CD4-positive, alpha-beta T cell (primary cell): ENCODE measurements at regions of chr15 and their contacts with region 1.

Region 1: GRCh38 chr15:63588826-63589225 is 8.4 kb upstream of the FBXL22 start:
- DNase-seq: no peak
- ATAC-seq: no peak
- H3K4me3 ChIP-seq: no peak overlapping the region
- H3K4me3 Mint-ChIP-seq: no peak overlapping the region
- H3K27ac ChIP-seq: no peak overlapping the region
- H3K27ac Mint-ChIP-seq: peak overlapping the region; percentile 15
- H3K4me1 ChIP-seq: no peaks in the 10 kb centered on the region
- H3K4me1 Mint-ChIP-seq: peaks cover 34% of the 10 kb centered on the region
- H3K27me3 ChIP-seq: no peaks in the 10 kb centered on the region
- H3K27me3 Mint-ChIP-seq: no peaks in the 10 kb centered on the region
- CTCF ChIP-seq: no peak

Region 2: DNA sequence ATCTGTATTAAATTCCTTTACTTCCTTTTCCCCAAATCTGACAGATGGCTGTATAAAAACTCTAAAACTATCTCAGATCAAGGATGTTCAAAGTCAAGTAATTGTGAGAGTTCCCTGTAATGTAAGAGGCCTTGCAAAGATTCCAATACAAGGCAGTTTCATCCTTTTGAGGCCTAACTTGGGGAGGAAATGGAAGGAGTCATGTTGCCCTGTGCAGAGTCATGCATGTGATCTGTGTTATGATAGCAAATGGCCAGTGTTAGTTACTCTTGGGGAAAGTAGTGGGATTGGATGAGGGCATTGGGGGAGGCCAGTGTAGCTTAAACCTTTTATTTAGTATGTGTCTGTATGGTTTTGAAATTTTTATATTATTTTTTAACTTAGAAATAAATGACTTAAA is 15.3 kb before region 1 on chr15:
- CTCF ChIA-PET with region 1: no interaction called
- POLR2A ChIA-PET with region 1: no interaction called
- intact Hi-C with region 1: loop called in 1 of 2 experiments (anchors 2 kb)
- DNase-seq: no peak
- ATAC-seq: no peak
- H3K4me3 ChIP-seq: no peak overlapping the region
- H3K4me3 Mint-ChIP-seq: no peak overlapping the region
- H3K27ac ChIP-seq: no peak overlapping the region
- H3K27ac Mint-ChIP-seq: peak overlapping the region; percentile 18
- H3K4me1 ChIP-seq: no peaks in the 10 kb centered on the region
- H3K4me1 Mint-ChIP-seq: peaks cover 23% of the 10 kb centered on the region
- H3K27me3 ChIP-seq: no peaks in the 10 kb centered on the region
- H3K27me3 Mint-ChIP-seq: no peaks in the 10 kb centered on the region
- CTCF ChIP-seq: no peak

Region 3: DNA sequence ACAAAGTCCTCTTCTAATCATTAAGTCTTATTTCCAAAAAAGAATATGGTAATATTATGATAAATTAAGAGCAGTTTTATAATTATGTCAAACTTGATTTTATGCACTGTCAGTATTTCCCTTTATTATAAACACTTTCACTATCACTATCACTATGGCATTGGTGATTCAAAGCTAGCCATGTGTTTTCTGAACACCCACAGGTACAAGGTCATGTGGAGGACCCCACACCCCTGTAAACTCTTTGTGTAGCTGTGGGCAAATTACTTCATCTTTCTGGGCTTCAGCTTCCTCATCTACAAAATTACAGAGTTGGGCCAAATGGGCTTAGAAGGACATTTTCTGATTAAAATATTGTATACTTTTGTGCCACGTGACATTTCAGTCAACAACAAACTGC is 50.0 kb after region 1 on chr15:
- CTCF ChIA-PET with region 1: no interaction called
- POLR2A ChIA-PET with region 1: no interaction called
- intact Hi-C with region 1: no loop called
- DNase-seq: no peak
- ATAC-seq: no peak
- H3K4me3 ChIP-seq: no peak overlapping the region
- H3K4me3 Mint-ChIP-seq: no peak overlapping the region
- H3K27ac ChIP-seq: no peak overlapping the region
- H3K27ac Mint-ChIP-seq: peak overlapping the region; percentile 42
- H3K4me1 ChIP-seq: no peaks in the 10 kb centered on the region
- H3K4me1 Mint-ChIP-seq: no peaks in the 10 kb centered on the region
- H3K27me3 ChIP-seq: no peaks in the 10 kb centered on the region
- H3K27me3 Mint-ChIP-seq: no peaks in the 10 kb centered on the region
- CTCF ChIP-seq: no peak